Dendritic cell treated with granulocyte-macrophage colony-stimulating factor and Interleukin-4, amounts not matched to agents 40 ng/mL and 50 ng/mL, for 4 days (primary cell): ENCODE measurements at regions of chr10 and their contacts with region 1.

Region 1: DNA sequence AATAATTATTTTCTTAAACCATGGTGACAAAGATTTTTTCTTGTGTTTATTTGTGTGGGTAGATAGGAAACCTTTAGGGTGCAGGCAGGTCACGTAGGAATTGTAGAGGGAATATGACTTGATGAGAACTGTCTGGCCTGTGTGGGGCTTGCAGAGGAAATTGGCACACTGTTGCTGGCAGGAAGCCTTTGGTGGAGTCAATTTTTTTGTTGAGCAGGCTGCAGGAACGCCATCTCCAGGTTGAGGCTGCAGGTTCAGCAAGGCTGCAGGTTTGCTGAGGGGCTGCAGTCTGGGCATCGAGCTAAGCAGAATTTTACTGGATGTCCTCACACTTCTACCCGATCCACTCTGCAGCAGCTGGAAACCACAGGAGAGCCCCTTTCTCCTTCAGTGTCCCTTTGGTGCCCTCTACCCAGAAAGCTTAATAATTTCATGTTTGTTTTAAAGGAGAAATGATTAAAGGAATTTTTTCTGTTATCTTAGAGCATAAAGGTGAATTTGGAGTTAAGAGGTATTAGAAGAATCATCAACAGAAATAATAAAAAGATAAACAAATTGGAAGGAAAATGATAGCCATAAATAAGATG is 37.0 kb downstream of the TBC1D12 start:
- H3K4me3 Mint-ChIP-seq: no peak overlapping the region
- H3K27ac Mint-ChIP-seq: no peak overlapping the region
- H3K4me1 Mint-ChIP-seq: peaks cover 8% of the 10 kb centered on the region
- H3K27me3 Mint-ChIP-seq: no peaks in the 10 kb centered on the region

Region 2: GRCh38 chr10:94279835-94280709 is 159.3 kb before region 1 on chr10:
- intact Hi-C with region 1: loop called (anchors 1 kb)
- H3K4me3 Mint-ChIP-seq: no peak overlapping the region
- H3K27ac Mint-ChIP-seq: no peak overlapping the region
- H3K4me1 Mint-ChIP-seq: no peaks in the 10 kb centered on the region
- H3K27me3 Mint-ChIP-seq: peaks cover 16% of the 10 kb centered on the region

Region 3: GRCh38 chr10:94409021-94409657 is 30.2 kb before region 1 on chr10:
- intact Hi-C with region 1: loop called (anchors 5 kb)
- H3K4me3 Mint-ChIP-seq: no peak overlapping the region
- H3K27ac Mint-ChIP-seq: no peak overlapping the region
- H3K4me1 Mint-ChIP-seq: peaks cover 41% of the 10 kb centered on the region
- H3K27me3 Mint-ChIP-seq: peaks cover 5% of the 10 kb centered on the region